Activated CD8-positive, alpha-beta T cell treated with anti-CD3 and anti-CD28 coated beads for 36 hours (primary cell): ENCODE measurements at regions of chr16 and their contacts with region 1.

Region 1: GRCh38 chr16:24253192-24253591 is 2.9 kb upstream of the CACNG3 start:
- DNase-seq: peak; percentile 57
- ATAC-seq: peak; percentile 69
- H3K4me3 Mint-ChIP-seq: no peak overlapping the region
- H3K27ac Mint-ChIP-seq: no peak overlapping the region
- H3K4me1 Mint-ChIP-seq: no peaks in the 10 kb centered on the region
- H3K27me3 Mint-ChIP-seq: peaks cover 47% of the 10 kb centered on the region
- CTCF ChIP-seq: peak; percentile 77

Region 2: GRCh38 chr16:24041826-24042631 is 211.2 kb before region 1 on chr16:
- CTCF ChIA-PET with region 1: interaction called, 58 read pairs
- POLR2A ChIA-PET with region 1: no interaction called
- intact Hi-C with region 1: loop called (anchors 2 kb)
- DNase-seq: peak; percentile 92
- ATAC-seq: peak; percentile 97
- H3K4me3 Mint-ChIP-seq: no peak overlapping the region
- H3K27ac Mint-ChIP-seq: no peak overlapping the region
- H3K4me1 Mint-ChIP-seq: peaks cover 4% of the 10 kb centered on the region
- H3K27me3 Mint-ChIP-seq: no peaks in the 10 kb centered on the region
- CTCF ChIP-seq: peak; percentile 86

Region 3: DNA sequence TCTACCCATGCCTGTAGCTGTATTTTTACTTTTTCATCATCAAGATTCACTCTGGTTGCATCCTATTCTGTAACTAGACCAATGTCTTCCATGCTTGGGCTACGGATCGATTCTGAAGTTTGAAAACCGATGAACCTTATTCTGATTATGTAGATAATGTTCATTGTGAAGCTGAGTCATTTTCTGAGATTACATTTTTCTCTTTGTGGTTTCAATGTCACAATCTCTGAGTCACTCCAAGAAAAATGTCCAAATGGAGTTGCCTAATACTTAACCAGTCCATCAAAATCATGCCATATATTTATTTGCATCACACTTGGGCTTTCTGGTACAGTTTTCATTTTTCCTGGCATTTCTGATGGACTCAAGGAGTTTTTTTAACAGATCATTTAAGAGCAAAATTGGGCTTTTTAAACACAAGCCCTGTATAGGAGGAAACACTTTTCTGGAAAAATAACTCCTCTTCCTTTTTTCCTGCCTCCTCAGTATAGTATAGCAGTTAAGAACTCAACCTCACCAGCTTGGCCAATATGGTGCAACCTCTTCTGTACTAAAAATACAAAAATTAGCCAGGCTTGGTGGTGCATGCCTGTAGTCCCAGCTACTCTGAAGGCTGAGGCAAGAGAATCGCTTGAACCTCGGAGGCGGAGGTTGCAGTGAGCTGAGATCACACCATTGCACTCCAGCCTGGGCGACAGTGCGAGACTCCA is 20.4 kb after region 1 on chr16:
- CTCF ChIA-PET with region 1: interaction called, 12 read pairs
- POLR2A ChIA-PET with region 1: no interaction called
- intact Hi-C with region 1: no loop called
- DNase-seq: no peak
- ATAC-seq: no peak
- H3K4me3 Mint-ChIP-seq: no peak overlapping the region
- H3K27ac Mint-ChIP-seq: no peak overlapping the region
- H3K4me1 Mint-ChIP-seq: no peaks in the 10 kb centered on the region
- H3K27me3 Mint-ChIP-seq: peaks cover 24% of the 10 kb centered on the region
- CTCF ChIP-seq: no peak

Region 4: DNA sequence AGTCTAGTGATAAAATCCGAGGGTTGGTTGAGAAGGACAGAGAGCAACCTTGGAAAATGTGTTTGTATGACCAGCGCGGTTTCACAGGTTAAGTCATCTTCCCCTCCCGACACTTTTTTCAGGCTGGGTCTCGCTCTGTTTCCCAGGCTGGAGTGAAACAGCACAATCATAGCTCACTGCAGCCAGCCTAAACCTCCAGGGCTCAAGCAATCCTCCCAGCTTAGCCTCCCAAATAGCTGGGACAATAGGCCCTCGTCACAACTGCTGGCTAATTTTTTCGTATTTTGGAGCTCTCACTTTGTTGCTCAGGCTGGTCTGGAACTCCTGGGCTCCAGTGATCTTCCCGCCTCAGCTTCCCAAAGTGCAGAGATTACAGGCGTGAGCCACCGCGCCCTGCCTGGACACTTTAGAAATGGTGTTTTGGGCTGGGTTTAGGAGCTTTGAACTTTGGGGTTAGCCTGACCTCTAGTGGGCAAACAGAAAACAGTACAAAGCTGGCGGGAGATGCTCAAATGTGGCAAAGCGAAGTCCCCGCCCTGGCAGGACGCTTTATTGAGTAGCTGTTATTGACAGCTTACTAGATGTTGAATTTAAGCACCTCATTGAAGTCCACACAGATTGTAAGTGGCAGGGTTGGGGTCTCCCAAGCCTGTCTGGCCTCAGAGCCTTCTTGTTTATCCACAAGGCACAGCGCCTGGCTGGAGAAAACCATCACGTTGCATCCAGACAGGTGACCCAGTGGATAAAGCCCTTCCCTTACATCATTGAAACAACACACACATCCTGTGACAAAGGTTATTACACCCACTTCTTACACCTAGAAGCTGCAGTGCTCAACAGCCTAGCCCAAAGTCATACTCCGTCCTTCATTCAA is 251.5 kb after region 1 on chr16:
- CTCF ChIA-PET with region 1: interaction called, 24 read pairs
- POLR2A ChIA-PET with region 1: no interaction called
- intact Hi-C with region 1: loop called (anchors 10 kb)
- DNase-seq: peak; percentile 66
- ATAC-seq: peak; percentile 88
- H3K4me3 Mint-ChIP-seq: no peak overlapping the region
- H3K27ac Mint-ChIP-seq: no peak overlapping the region
- H3K4me1 Mint-ChIP-seq: no peaks in the 10 kb centered on the region
- H3K27me3 Mint-ChIP-seq: peaks cover 10% of the 10 kb centered on the region
- CTCF ChIP-seq: peak; percentile 76